ENCODE measurements at regions of chr18 and their contacts with region 1.

Region 1: GRCh38 chr18:21831413-21831831 is 90.8 kb downstream of the MIB1 start:
- DNase-seq: no peak
- H3K4me3 ChIP-seq: peak overlapping the region; percentile 28 to 49 (median 45)
- H3K27ac ChIP-seq: peak overlapping the region; percentile 73 to 79 (median 76)
- H3K4me1 ChIP-seq: peaks cover 7 to 51% (median 40%) of the 10 kb centered on the region in 4 donors
- H3K27me3 ChIP-seq: no peaks in the 10 kb centered on the region
- CTCF ChIP-seq: no peak
- EP300 ChIP-seq: no peak
- POLR2A ChIP-seq: no peak

Region 2: GRCh38 chr18:21612125-21612991 is 219.1 kb before region 1 on chr18 and contains the start of gene SNRPD1:
- intact Hi-C with region 1: loop called (anchors 10 kb)
- DNase-seq: peak; percentile 96
- H3K4me3 ChIP-seq: peak within 1 kb of the TSS; percentile 69 to 75 (median 70)
- H3K27ac ChIP-seq: peak within 1 kb of the TSS; percentile 74 to 87 (median 78)
- H3K4me1 ChIP-seq: peaks cover 14 to 27% (median 25%) of the 10 kb centered on the region in 4 donors
- H3K27me3 ChIP-seq: no peaks in the 10 kb centered on the region
- CTCF ChIP-seq: peak; percentile 91 to 97 (median 97)
- EP300 ChIP-seq: no peak
- POLR2A ChIP-seq: no peak
- total RNA-seq, gene SNRPD1: 7.1 to 8.8 (median 8.1) TPM

Region 3: DNA sequence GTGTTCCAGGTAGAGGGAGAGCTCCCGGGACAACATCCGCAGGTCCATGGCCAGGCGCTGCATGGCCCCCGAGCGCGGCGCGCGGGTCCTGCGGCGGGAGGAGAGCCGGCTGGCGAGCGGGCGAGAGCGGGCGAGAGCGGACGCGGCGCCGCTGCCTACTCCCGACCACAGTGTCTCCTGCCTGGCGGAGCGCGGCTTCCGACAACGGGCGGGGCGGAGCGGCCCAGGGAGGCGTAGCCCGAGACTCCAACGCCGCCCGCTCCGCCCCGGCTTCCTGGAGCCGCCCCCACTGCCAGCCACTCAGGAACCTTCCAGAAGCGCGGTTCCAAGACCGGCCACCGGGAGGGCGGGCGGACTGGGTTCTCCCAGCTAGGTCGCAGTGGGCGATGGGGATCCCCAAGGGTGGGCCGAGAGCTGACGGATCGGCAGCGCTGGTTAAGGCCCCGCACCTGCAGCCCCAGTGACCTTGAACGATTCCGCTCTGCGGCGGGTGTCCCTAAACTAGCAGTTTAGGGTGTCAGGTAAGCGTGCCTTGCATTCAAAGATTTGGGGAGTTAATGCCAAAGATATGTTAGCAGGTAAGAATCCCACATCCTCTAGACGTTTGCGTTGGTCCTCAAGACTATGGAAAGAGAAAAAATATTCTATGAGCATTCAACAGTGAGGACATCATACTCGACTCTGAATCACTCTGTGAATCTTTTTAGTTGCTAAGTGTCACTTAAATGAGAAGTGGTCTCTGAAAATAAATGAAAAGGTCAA is 126.6 kb before region 1 on chr18 and contains the start of gene ABHD3:
- intact Hi-C with region 1: loop called (anchors 10 kb)
- DNase-seq: peak; percentile 95
- H3K4me3 ChIP-seq: peak within 1 kb of the TSS; percentile 77 to 90 (median 84)
- H3K27ac ChIP-seq: peak within 1 kb of the TSS; percentile 91 to 97 (median 96)
- H3K4me1 ChIP-seq: peaks cover 16 to 23% (median 20%) of the 10 kb centered on the region in 4 donors
- H3K27me3 ChIP-seq: no peaks in the 10 kb centered on the region
- CTCF ChIP-seq: peak; percentile 28 to 73 (median 41)
- EP300 ChIP-seq: no peak
- POLR2A ChIP-seq: peak; percentile 56
- total RNA-seq, gene ABHD3: 5.1 to 8.3 (median 7.0) TPM